GM12878 (cell line): ENCODE measurements at regions of chr7 and their contacts with region 1.

Region 1: DNA sequence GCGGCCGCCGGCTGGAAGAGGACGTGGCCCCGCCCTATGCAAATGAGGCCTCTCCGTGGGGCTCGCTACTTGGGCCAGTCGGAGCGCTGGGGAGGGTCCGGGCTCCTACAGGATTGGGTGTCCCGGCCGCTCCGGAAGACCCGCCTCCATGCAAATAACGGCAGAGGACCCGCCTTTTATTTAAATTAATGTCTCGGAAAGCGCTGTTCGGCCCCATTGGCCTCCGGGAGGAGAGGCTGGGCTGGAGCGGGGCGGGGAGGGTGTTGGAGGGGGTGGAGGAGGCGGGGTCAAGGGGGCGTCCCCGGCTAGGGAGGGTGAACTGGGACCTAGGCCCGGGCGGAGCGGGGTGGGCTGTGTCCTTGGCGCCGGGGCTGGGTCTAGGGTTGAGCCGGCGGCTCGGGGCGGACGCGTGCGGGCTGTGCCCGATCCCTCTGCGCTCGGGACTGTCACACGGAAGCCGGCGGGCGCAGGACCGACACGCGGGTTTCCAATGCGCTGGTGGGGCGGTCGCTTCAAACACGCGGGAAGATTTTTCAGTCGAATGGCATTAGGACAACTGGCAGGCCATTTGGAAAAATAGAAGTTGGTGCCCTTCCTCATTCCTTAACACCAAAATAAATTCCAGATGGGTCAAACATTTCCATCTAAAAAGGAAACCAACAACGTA is 344 bp upstream of the POLM start:
- DNase-seq: peak; percentile 88
- ATAC-seq: peak; percentile 92
- H3K4me3 ChIP-seq: peak overlapping the region; percentile 65
- H3K27ac ChIP-seq: peak overlapping the region; percentile 61
- H3K4me1 ChIP-seq: peaks cover 18% of the 10 kb centered on the region
- H3K27me3 ChIP-seq: no peaks in the 10 kb centered on the region
- CTCF ChIP-seq: no peak
- EP300 ChIP-seq: no peak
- POLR2A ChIP-seq: no peak; the same call in 1 of the 2 replicates
- RAD21 ChIP-seq: no peak

Region 2: GRCh38 chr7:44044315-44045225 is 38.1 kb before region 1 on chr7 and contains the start of gene DBNL:
- CTCF ChIA-PET with region 1: no interaction called
- POLR2A ChIA-PET with region 1: interaction called, 16 read pairs
- RAD21 ChIA-PET with region 1: no interaction called
- SMC1A ChIA-PET with region 1: interaction called, 3 read pairs
- in situ Hi-C with region 1: no loop called
- intact Hi-C with region 1: no loop called
- DNase-seq: peak; percentile 45
- ATAC-seq: peak; percentile 83
- H3K4me3 ChIP-seq: peak within 1 kb of the TSS; percentile 83
- H3K27ac ChIP-seq: peak within 1 kb of the TSS; percentile 88
- H3K4me1 ChIP-seq: peaks cover 15% of the 10 kb centered on the region
- H3K27me3 ChIP-seq: no peaks in the 10 kb centered on the region
- CTCF ChIP-seq: no peak
- EP300 ChIP-seq: no peak
- POLR2A ChIP-seq: peak; percentile 97
- RAD21 ChIP-seq: no peak
- polyA plus RNA-seq, gene DBNL: 4.1 to 18.5 TPM

Region 3: GRCh38 chr7:44123190-44124003 is 40.7 kb after region 1 on chr7 and contains the start of gene POLD2:
- CTCF ChIA-PET with region 1: no interaction called
- POLR2A ChIA-PET with region 1: no interaction called
- RAD21 ChIA-PET with region 1: interaction called, 5 read pairs
- SMC1A ChIA-PET with region 1: interaction called, 10 read pairs
- in situ Hi-C with region 1: no loop called
- intact Hi-C with region 1: loop called (anchors 2 kb)
- DNase-seq: peak; percentile 79
- ATAC-seq: peak; percentile 100
- H3K4me3 ChIP-seq: peak within 1 kb of the TSS; percentile 89
- H3K27ac ChIP-seq: peak within 1 kb of the TSS; percentile 76
- H3K4me1 ChIP-seq: peaks cover 6% of the 10 kb centered on the region
- H3K27me3 ChIP-seq: no peaks in the 10 kb centered on the region
- CTCF ChIP-seq: no peak
- EP300 ChIP-seq: no peak
- POLR2A ChIP-seq: peak; percentile 89
- RAD21 ChIP-seq: no peak
- polyA plus RNA-seq, gene POLD2: 19.1 to 42.7 TPM